PC-9 (cell line): ENCODE measurements at regions of chr17 and their contacts with region 1.

Region 1: DNA sequence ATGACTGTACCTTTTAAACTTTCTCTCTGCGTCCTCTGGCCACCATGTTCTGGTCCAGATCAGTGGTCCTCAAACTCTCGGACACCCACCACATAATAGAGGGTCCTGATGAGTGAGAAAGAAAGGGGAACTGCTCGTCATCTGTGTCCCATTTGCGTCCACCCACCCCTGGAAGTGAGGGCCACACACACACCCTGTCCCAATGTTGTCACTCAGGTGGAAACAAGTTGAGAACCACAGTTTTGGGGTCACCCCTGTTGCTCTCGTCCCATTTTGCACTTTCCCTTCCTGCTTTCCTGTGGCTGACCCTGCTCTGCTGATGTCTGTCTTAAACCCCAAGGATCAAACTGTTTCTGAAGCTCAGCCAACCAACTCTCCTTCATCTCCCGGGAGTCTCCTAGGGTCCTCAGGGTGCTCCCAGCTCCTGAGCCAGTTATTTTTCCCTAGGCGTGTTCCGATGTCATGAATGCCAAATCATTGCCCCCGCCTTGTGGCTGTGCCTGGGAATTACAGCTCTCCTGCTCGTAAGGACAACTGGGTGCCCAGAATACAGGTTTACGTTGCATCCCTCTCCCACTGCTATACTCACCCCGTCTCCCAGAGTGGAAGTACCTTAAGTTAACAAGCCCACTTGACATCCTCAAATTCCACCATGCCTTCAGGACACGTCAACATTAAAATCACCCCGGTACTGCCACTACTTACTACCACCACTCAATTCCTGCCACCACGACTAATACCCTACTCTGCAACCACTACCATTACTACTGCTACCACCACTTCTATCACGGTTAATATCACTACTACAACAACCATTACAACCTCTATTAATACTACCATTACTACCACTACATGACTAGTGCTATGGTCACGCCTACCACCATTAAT is 26.0 kb upstream of the HNF1B start:
- DNase-seq: peak; percentile 37 to 56
- H3K4me3 ChIP-seq: no peak overlapping the region
- H3K27ac ChIP-seq: no peak overlapping the region
- H3K4me1 ChIP-seq: no peaks in the 10 kb centered on the region
- H3K27me3 ChIP-seq: no peaks in the 10 kb centered on the region
- CTCF ChIP-seq: peak; percentile 88

Region 2: GRCh38 chr17:37643118-37643766 is 127.6 kb before region 1 on chr17 and contains the start of gene DDX52:
- CTCF ChIA-PET with region 1: no interaction called
- POLR2A ChIA-PET with region 1: no interaction called
- intact Hi-C with region 1: loop called (anchors 2 kb)
- DNase-seq: peak; percentile 84 to 85
- H3K4me3 ChIP-seq: peak within 1 kb of the TSS; percentile 79
- H3K27ac ChIP-seq: peak within 1 kb of the TSS; percentile 49
- H3K4me1 ChIP-seq: peaks cover 16% of the 10 kb centered on the region
- H3K27me3 ChIP-seq: no peaks in the 10 kb centered on the region
- CTCF ChIP-seq: no peak
- total RNA-seq, gene DDX52: 23.5 and 31.8 TPM in 2 replicates

Region 3: DNA sequence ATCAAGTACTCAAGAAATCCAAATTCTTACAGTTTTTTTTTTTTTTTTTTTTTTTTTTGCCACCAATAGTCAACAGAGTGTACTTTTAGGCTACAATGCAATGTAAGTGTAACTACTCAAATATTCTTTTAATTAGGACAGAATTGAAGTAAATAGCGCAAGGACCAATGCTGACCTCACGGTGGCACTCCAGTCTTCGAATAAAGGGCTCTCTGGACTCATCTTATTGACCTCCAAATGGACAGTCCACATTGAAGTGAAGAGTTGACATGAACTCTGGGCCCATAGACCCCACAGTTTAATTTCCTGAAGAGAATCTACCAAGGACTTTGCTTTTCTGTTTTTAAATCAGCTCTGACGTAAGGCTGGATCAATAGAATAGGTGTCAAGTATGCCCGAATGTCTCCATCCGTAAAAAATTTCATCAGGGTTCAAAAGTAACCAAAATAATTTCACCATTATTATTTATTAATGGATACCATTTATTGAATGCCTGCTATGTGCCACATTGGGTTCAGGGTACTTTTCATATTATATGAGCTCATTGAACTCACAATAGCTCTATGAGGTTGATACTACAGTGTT is 120.4 kb before region 1 on chr17:
- CTCF ChIA-PET with region 1: interaction called, 5 read pairs
- POLR2A ChIA-PET with region 1: no interaction called
- intact Hi-C with region 1: loop called (anchors 1 kb)
- DNase-seq: peak; percentile 19 to 48
- H3K4me3 ChIP-seq: no peak overlapping the region
- H3K27ac ChIP-seq: no peak overlapping the region
- H3K4me1 ChIP-seq: peaks cover 11% of the 10 kb centered on the region
- H3K27me3 ChIP-seq: no peaks in the 10 kb centered on the region
- CTCF ChIP-seq: peak; percentile 68

Region 4: DNA sequence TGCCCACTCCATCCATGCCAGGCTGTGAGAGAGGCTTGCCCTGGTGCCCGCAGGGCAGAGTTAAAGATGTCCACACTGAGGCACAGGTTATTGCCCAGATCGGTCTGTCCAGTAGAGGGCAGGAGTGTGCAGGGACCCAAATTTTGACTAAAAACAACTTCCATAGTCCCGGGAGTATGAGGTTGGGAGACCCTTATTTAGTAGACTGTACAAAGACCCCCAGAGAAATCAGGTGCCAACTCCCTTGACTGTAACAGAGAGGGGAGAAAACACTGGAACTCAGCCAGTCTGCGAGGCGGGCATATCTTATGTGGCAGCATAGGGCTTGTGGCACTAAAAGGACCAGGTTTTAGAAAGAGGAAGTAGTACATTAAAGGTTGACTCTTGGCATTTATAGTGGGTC is 69.4 kb before region 1 on chr17:
- CTCF ChIA-PET with region 1: interaction called, 8 read pairs
- POLR2A ChIA-PET with region 1: no interaction called
- intact Hi-C with region 1: loop called (anchors 2 kb)
- DNase-seq: no peak
- H3K4me3 ChIP-seq: no peak overlapping the region
- H3K27ac ChIP-seq: no peak overlapping the region
- H3K4me1 ChIP-seq: peaks cover 26% of the 10 kb centered on the region
- H3K27me3 ChIP-seq: no peaks in the 10 kb centered on the region
- CTCF ChIP-seq: peak; percentile 75

Region 5: DNA sequence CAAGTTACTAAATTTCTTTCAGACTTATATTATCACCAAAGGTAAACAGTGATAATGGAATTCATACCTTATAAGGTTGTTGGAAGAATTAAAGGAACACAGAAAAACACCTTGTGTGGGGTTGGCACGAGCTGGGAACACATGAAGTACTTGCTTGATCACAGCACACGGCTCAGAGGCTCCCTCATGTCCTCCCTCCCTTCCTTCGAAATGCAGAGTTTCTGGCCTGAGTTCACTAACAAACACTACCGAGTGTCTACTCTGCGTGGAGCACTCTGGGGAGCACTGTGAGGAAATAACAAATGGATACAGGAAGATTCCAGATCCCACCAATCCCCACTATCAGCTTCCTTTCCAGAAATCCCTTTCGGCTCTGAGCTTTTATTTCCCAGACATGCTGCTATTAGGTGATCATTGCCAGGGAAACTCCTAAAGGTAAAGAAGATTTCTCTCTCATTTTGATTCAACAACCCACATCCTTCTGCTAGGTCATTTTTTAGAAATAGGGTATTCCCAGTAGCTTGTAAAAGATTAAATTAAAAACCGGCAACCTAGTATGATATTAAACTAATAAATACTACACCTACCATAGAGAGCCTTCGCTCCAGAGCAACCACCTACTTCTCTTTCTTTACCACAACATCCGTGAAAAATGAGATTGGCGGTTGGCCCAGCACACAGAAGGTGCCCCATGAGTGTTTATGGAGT is 20.0 kb before region 1 on chr17:
- CTCF ChIA-PET with region 1: no interaction called
- POLR2A ChIA-PET with region 1: interaction called, 11 read pairs
- intact Hi-C with region 1: no loop called
- DNase-seq: no peak
- H3K4me3 ChIP-seq: no peak overlapping the region
- H3K27ac ChIP-seq: no peak overlapping the region
- H3K4me1 ChIP-seq: no peaks in the 10 kb centered on the region
- H3K27me3 ChIP-seq: no peaks in the 10 kb centered on the region; the same call in 1 of the 2 replicates
- CTCF ChIP-seq: no peak

Region 6: GRCh38 chr17:37818689-37819088 is 47.8 kb after region 1 on chr17:
- CTCF ChIA-PET with region 1: interaction called, 11 read pairs
- POLR2A ChIA-PET with region 1: no interaction called
- intact Hi-C with region 1: no loop called
- DNase-seq: peak; percentile 73 to 77
- H3K4me3 ChIP-seq: no peak overlapping the region
- H3K27ac ChIP-seq: no peak overlapping the region
- H3K4me1 ChIP-seq: no peaks in the 10 kb centered on the region
- H3K27me3 ChIP-seq: 0 out of 2 replicates have a peak, but pooled peaks cover 4% of the 10 kb centered on the region
- CTCF ChIP-seq: no peak

Region 7: GRCh38 chr17:38729886-38730525 is 959.1 kb after region 1 on chr17 and contains the start of gene CISD3:
- CTCF ChIA-PET with region 1: no interaction called
- POLR2A ChIA-PET with region 1: no interaction called
- intact Hi-C with region 1: no loop called
- DNase-seq: peak; percentile 64 to 85
- H3K4me3 ChIP-seq: peak within 1 kb of the TSS; percentile 96
- H3K27ac ChIP-seq: peak within 1 kb of the TSS; percentile 12; the same call in 1 of the 2 replicates
- H3K4me1 ChIP-seq: peaks cover 11% of the 10 kb centered on the region
- H3K27me3 ChIP-seq: no peaks in the 10 kb centered on the region
- CTCF ChIP-seq: peak; percentile 61
- total RNA-seq, gene CISD3: 36.6 and 38.1 TPM in 2 replicates